ENCODE measurements at regions of chr3 and their contacts with region 1.

Region 1: GRCh38 chr3:194315088-194315964 is 35.8 kb downstream of the CPN2 start:
- DNase-seq: peak; percentile 88
- H3K4me3 Mint-ChIP-seq: peak overlapping the region; percentile 69
- H3K27ac Mint-ChIP-seq: peak overlapping the region; percentile 68
- H3K4me1 Mint-ChIP-seq: peaks cover 57% of the 10 kb centered on the region
- H3K27me3 Mint-ChIP-seq: peaks cover 33% of the 10 kb centered on the region

Region 2: DNA sequence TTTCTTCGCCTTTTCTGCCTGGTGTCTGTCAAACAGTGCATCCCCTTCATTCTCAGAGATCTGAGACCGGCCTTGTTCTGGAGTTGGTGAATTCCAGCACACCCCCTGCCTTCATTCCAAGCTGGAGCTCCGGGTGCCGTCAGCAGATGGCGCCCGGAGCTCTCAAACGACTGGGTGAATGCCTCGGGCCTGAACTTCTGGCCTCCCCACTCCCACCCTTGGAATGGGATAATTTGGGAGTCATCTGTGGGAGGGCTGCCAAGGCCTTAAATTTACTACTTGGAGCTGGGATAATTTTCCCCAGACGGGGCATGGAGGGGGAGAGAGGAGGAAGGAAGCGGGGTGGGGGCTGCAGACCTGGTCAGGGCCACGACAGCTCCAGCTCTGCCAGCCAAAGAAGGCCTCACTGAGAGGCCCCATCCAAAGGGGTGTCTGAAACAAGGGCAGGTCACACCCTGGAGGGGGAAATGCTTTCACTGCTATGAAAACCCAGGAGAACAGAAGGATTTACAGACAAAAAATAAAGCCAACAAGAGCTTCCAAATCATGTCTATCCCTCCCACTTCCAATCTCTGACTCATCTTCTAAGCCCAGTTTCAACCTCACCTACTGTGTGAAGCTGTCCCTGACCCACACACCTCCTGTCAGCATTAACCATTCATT is 534.4 kb before region 1 on chr3:
- CTCF ChIA-PET with region 1: interaction called, 88 read pairs
- POLR2A ChIA-PET with region 1: interaction called, 5 read pairs
- DNase-seq: peak; percentile 33
- H3K4me3 Mint-ChIP-seq: no peak overlapping the region
- H3K27ac Mint-ChIP-seq: no peak overlapping the region
- H3K4me1 Mint-ChIP-seq: peaks cover 19% of the 10 kb centered on the region
- H3K27me3 Mint-ChIP-seq: peaks cover 58% of the 10 kb centered on the region

Region 3: DNA sequence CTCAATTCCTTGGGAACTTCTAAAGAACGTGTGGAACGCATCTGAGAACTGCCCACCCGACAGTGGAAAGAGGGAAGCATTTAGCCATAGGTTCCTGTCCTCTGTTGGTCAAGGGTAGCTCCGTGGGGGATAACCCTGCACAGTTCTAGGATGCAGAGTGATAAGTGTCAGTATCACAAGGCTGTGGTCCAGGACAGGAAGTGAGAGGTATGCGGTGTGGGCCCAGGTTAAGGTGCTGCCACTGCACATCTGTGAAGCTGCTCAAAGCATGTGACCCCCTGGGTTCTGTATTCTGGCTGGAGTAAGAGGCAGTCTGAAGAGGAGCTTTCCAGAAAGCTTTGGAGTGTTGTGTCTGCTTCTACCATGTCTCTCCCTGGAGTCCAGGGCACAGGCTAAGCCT is 231.0 kb before region 1 on chr3:
- CTCF ChIA-PET with region 1: interaction called, 11 read pairs
- POLR2A ChIA-PET with region 1: no interaction called
- DNase-seq: peak; percentile 54
- H3K4me3 Mint-ChIP-seq: no peak overlapping the region
- H3K27ac Mint-ChIP-seq: no peak overlapping the region
- H3K4me1 Mint-ChIP-seq: peaks cover 22% of the 10 kb centered on the region
- H3K27me3 Mint-ChIP-seq: peaks cover 43% of the 10 kb centered on the region

Region 4: GRCh38 chr3:194184265-194184751 is 131.0 kb before region 1 on chr3:
- CTCF ChIA-PET with region 1: no interaction called
- POLR2A ChIA-PET with region 1: no interaction called
- DNase-seq: no peak
- H3K4me3 Mint-ChIP-seq: no peak overlapping the region
- H3K27ac Mint-ChIP-seq: no peak overlapping the region
- H3K4me1 Mint-ChIP-seq: peaks cover 13% of the 10 kb centered on the region
- H3K27me3 Mint-ChIP-seq: peaks cover 19% of the 10 kb centered on the region

Region 5: GRCh38 chr3:194256040-194256945 is 59.0 kb before region 1 on chr3:
- CTCF ChIA-PET with region 1: interaction called, 10 read pairs
- POLR2A ChIA-PET with region 1: interaction called, 3 read pairs
- DNase-seq: peak; percentile 14
- H3K4me3 Mint-ChIP-seq: no peak overlapping the region
- H3K27ac Mint-ChIP-seq: peak overlapping the region; percentile 84
- H3K4me1 Mint-ChIP-seq: peaks cover 38% of the 10 kb centered on the region
- H3K27me3 Mint-ChIP-seq: no peaks in the 10 kb centered on the region

Region 6: DNA sequence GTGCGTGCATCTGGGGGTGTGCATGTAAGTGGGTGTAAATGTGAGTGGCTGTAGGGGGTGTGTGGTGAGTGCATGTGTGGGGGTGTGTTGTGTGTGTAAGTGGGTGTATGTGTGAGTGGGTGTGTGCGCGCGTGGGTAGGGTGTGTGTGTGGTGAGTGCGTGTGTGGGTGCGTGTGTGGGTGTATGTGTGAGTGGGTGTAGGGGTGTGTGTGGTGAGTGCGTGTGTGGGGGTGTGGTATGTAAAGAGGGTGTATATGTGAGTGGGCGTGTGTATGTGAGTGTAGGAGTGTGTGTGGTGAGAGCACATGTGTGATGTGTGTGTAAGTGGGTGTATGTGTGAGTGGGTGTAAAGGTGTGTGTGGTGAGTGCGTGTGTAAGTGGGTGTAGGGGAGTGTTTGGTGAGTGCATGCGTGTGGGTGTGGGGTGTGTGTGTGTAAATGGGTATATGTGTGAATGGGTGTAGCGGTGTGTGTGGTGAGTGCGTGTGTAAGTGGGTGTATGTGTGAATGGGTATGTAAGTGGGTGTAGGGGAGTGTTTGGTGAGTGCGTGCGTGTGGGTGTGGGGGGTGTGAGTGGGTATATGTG is 36.7 kb after region 1 on chr3:
- CTCF ChIA-PET with region 1: no interaction called
- POLR2A ChIA-PET with region 1: no interaction called
- DNase-seq: no peak
- H3K4me3 Mint-ChIP-seq: no peak overlapping the region
- H3K27ac Mint-ChIP-seq: no peak overlapping the region
- H3K4me1 Mint-ChIP-seq: no peaks in the 10 kb centered on the region
- H3K27me3 Mint-ChIP-seq: peaks cover 4% of the 10 kb centered on the region